HCT116 (cell line): ENCODE measurements at regions of chr5 and their contacts with region 1.

Region 1: GRCh38 chr5:61331407-61332357 is at the start of gene ZSWIM6:
- DNase-seq: peak; percentile 96
- ATAC-seq: peak; percentile 80
- H3K4me3 ChIP-seq: peak within 1 kb of the TSS; percentile 76 to 86
- H3K27ac ChIP-seq: peak within 1 kb of the TSS; percentile 75
- H3K4me1 ChIP-seq: peaks cover 9 to 35% of the 10 kb centered on the region in 2 experiments
- H3K27me3 ChIP-seq: no peaks in the 10 kb centered on the region
- CTCF ChIP-seq: no peak
- POLR2A ChIP-seq: peak; percentile 79
- RAD21 ChIP-seq: no peak
- total RNA-seq, gene ZSWIM6: 7.4 TPM

Region 2: GRCh38 chr5:61162010-61162831 is 169.5 kb before region 1 on chr5 and contains the start of gene SMIM15:
- CTCF ChIA-PET with region 1: no interaction called
- POLR2A ChIA-PET with region 1: no interaction called
- RAD21 ChIA-PET with region 1: interaction called in 1 of 2 experiments, 3 read pairs
- intact Hi-C with region 1: loop called (anchors 2 kb)
- DNase-seq: peak; percentile 79
- ATAC-seq: peak; percentile 94
- H3K4me3 ChIP-seq: peak within 1 kb of the TSS; percentile 92 to 95
- H3K27ac ChIP-seq: peak within 1 kb of the TSS; percentile 87
- H3K4me1 ChIP-seq: peaks cover 0 to 16% of the 10 kb centered on the region in 2 experiments; a peak in 2 of 4 replicates
- H3K27me3 ChIP-seq: no peaks in the 10 kb centered on the region
- CTCF ChIP-seq: no peak
- POLR2A ChIP-seq: peak; percentile 59
- RAD21 ChIP-seq: no peak
- total RNA-seq, gene SMIM15: 83.9 TPM

Region 3: GRCh38 chr5:61408476-61409168 is 76.9 kb after region 1 on chr5:
- CTCF ChIA-PET with region 1: no interaction called
- POLR2A ChIA-PET with region 1: interaction called, 5 read pairs
- RAD21 ChIA-PET with region 1: no interaction called
- intact Hi-C with region 1: loop called (anchors 2 kb)
- DNase-seq: peak; percentile 99
- ATAC-seq: peak; percentile 98
- H3K4me3 ChIP-seq: peak overlapping the region; percentile 14 to 41
- H3K27ac ChIP-seq: peak overlapping the region; percentile 55; the same call in 1 of the 2 replicates
- H3K4me1 ChIP-seq: peaks cover 31 to 36% of the 10 kb centered on the region in 2 experiments
- H3K27me3 ChIP-seq: no peaks in the 10 kb centered on the region
- CTCF ChIP-seq: no peak
- POLR2A ChIP-seq: no peak
- RAD21 ChIP-seq: peak; percentile 37

Region 4: DNA sequence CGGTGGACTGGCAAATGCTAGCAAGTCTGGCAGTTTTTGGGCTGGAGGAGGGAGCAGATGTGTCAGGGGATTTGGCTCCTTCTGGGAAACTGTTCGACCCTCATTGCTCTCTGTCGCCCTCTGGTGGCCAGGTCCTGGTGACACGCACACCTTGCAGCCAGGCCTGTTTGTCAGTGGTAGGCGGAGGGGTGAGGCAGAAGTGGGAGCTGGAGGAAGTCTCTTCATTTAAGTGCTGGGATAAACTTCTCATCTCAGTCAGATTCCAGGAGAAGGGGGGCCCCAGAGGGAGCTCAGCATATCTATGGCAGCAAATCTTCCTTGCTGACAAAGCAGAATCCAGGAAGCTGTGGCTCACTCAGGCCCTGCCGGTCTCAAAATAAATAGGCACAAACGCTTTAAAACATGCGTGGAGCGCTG is 326.9 kb after region 1 on chr5:
- CTCF ChIA-PET with region 1: no interaction called
- POLR2A ChIA-PET with region 1: no interaction called
- RAD21 ChIA-PET with region 1: interaction called in 1 of 2 experiments, 4 read pairs
- intact Hi-C with region 1: loop called (anchors 1 kb)
- DNase-seq: peak; percentile 67
- ATAC-seq: peak; percentile 98
- H3K4me3 ChIP-seq: no peak overlapping the region
- H3K27ac ChIP-seq: no peak overlapping the region
- H3K4me1 ChIP-seq: no peaks in the 10 kb centered on the region
- H3K27me3 ChIP-seq: no peaks in the 10 kb centered on the region
- CTCF ChIP-seq: peak; percentile 65 to 97 (median 91); a peak in 5 of 6 replicates
- POLR2A ChIP-seq: no peak
- RAD21 ChIP-seq: peak; percentile 81

Region 5: DNA sequence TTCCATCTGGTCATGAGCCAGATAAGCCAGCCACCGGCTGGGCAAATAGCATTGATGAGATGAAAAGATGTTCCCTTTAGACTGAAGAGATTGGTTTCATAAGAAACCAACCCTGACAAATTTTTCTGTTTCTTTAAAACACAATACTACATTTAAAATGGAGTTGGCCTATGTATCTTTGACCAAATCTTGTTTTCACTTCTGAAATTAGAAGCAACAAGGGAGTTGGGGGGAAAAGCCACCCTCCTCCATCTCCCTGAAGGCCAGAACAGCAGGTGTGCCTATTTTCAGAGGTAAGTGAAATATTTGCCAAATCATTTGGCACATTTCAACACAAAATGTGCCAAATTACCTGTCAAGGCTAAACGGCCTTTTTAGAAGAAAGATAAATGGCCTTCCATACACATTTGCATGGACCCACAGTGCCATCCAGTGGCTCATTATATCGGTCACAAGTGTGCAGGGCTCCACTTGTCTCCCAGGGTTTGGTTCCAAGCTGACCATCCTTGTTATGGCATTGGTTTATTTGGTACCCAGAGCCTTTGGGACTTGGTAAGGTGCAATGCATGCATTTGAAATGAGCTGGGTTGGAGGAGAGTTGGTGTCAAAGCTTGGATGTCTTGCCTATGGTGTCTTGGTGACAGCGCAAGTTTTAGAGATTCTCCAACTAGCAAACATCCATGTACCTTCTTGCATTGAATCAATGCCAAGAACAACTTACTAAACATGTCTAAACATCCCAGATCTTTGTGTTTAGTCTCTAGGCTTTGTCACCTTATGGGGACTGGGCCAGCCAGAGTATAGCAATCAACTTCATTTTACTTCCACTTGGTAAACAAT is 602.3 kb after region 1 on chr5:
- CTCF ChIA-PET with region 1: no interaction called
- POLR2A ChIA-PET with region 1: no interaction called
- RAD21 ChIA-PET with region 1: no interaction called
- intact Hi-C with region 1: loop called (anchors 10 kb)
- DNase-seq: peak; percentile 34
- ATAC-seq: peak; percentile 87
- H3K4me3 ChIP-seq: no peak overlapping the region
- H3K27ac ChIP-seq: no peak overlapping the region
- H3K4me1 ChIP-seq: no peaks in the 10 kb centered on the region
- H3K27me3 ChIP-seq: no peaks in the 10 kb centered on the region; the same call in 1 of the 2 replicates
- CTCF ChIP-seq: peak; percentile 44 to 66 (median 61); a peak in 5 of 6 replicates
- POLR2A ChIP-seq: no peak
- RAD21 ChIP-seq: peak; percentile 81